Activated CD4-positive, alpha-beta T cell treated with anti-CD3 and anti-CD28 coated beads for 36 hours (primary cell): ENCODE measurements at regions of chr1 and their contacts with region 1.

Region 1: GRCh38 chr1:101288491-101288944 is 51.7 kb downstream of the S1PR1 start:
- DNase-seq: peak; percentile 80
- ATAC-seq: peak; percentile 31
- H3K4me3 Mint-ChIP-seq: no peak overlapping the region
- H3K27ac Mint-ChIP-seq: peak overlapping the region; percentile 58
- H3K4me1 Mint-ChIP-seq: peaks cover 92% of the 10 kb centered on the region
- H3K27me3 Mint-ChIP-seq: no peaks in the 10 kb centered on the region

Region 2: GRCh38 chr1:100265931-100266740 is 1022.4 kb before region 1 on chr1 and contains the start of gene RTCA:
- CTCF ChIA-PET with region 1: no interaction called
- POLR2A ChIA-PET with region 1: no interaction called
- intact Hi-C with region 1: no loop called
- DNase-seq: peak; percentile 97
- ATAC-seq: peak; percentile 93
- H3K4me3 Mint-ChIP-seq: peak within 1 kb of the TSS; percentile 100
- H3K27ac Mint-ChIP-seq: peak within 1 kb of the TSS; percentile 99
- H3K4me1 Mint-ChIP-seq: peaks cover 32% of the 10 kb centered on the region
- H3K27me3 Mint-ChIP-seq: no peaks in the 10 kb centered on the region
- total RNA-seq, gene RTCA: 47.8 to 53.0 TPM

Region 3: DNA sequence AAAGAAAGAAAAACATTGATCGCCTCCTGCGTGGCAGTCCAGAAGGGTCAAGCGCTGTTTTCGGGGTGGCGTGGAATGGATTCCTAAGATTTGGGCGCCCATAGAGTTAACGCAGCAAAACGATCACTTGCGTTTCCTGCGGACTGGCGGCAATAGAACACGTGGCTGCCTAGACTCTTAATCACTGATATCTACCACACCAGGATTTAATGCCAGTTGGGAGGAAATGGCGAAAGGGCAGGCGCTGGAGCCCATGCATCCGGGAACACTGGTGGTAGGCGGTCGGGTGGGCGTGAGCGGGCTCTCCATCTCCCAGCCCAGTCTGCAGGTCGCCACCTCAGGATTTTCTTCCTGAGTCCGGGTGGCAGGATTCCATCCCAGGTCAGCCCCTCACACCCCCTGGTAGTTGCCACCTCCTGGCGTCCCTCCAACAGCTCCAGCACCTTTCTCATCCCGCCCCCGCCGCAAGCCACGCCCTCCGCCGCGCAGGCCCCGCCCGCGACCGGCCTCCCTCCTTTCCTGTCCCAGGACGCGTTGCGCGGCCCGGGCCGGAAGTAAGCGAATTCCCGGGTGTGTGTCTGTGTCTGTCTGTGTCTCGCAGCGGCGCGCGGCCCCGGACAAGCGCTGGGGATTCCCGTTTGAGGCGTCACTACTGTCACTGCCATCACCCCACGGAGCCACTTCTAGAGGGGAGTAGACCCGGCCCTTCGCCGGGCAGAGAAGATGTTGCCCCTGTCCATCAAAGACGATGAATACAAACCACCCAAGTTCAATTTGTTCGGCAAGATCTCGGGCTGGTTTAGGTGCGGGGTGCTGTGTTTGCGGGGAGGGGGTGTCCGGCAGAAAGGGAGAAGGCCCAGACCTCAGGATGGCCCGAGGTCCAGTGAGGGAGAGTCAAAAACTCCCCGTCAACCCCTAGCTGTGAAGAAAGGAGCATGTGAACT is 392.7 kb before region 1 on chr1 and contains the start of gene SLC30A7:
- CTCF ChIA-PET with region 1: interaction called, 6 read pairs
- POLR2A ChIA-PET with region 1: no interaction called
- intact Hi-C with region 1: loop called in 1 of 2 experiments (anchors 1 kb)
- DNase-seq: peak; percentile 98
- ATAC-seq: peak; percentile 81
- H3K4me3 Mint-ChIP-seq: peak within 1 kb of the TSS; percentile 100
- H3K27ac Mint-ChIP-seq: peak within 1 kb of the TSS; percentile 100
- H3K4me1 Mint-ChIP-seq: peaks cover 44% of the 10 kb centered on the region
- H3K27me3 Mint-ChIP-seq: no peaks in the 10 kb centered on the region
- total RNA-seq, gene SLC30A7: 33.2 to 34.6 TPM

Region 4: GRCh38 chr1:101002551-101002950 is 286.0 kb before region 1 on chr1:
- CTCF ChIA-PET with region 1: interaction called, 7 read pairs
- POLR2A ChIA-PET with region 1: no interaction called
- intact Hi-C with region 1: loop called (anchors 2 to 5 kb)
- DNase-seq: no peak
- ATAC-seq: no peak
- H3K4me3 Mint-ChIP-seq: no peak overlapping the region
- H3K27ac Mint-ChIP-seq: no peak overlapping the region
- H3K4me1 Mint-ChIP-seq: peaks cover 50% of the 10 kb centered on the region
- H3K27me3 Mint-ChIP-seq: no peaks in the 10 kb centered on the region

Region 5: GRCh38 chr1:101130673-101131072 is 157.8 kb before region 1 on chr1:
- CTCF ChIA-PET with region 1: interaction called, 31 read pairs
- POLR2A ChIA-PET with region 1: interaction called, 3 read pairs
- intact Hi-C with region 1: no loop called
- DNase-seq: no peak
- ATAC-seq: no peak
- H3K4me3 Mint-ChIP-seq: no peak overlapping the region
- H3K27ac Mint-ChIP-seq: no peak overlapping the region
- H3K4me1 Mint-ChIP-seq: peaks cover 68% of the 10 kb centered on the region
- H3K27me3 Mint-ChIP-seq: no peaks in the 10 kb centered on the region

Region 6: DNA sequence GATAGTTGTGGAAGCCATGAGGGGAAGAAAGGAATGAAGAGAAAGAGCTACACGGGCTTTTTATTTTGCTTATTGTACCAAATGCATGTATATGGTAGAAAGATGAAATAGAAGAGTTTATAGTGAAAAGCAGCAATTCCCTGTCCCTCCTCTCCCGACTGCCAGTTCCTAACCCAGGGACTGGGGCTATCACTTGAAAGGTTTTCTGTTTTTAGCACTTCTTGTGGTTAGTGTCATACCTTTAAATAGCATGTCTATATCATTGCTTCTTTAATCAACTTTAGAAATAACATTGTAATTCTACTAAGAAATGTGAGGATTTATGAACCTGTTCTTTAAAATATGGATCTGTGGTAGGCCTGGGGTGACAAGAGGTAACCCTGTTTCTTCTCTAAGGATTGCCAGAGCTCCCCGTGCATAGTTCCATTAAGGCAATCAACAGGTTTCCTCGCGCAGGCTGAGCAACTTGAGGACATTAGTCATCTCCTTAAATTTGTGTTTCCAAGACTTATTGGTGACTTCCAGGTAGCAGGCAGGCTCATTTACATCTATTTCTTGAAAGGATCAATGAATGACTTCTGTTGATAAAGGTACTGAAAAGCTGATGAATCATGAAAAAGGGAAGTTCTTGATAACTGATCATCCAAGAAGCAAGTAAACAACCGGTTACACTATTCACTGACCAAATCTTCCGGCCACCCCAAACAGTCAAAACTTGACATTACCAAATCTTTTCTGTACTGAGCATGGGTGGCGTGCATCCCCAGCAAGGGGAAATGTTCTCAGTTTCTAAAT is 89.5 kb before region 1 on chr1:
- CTCF ChIA-PET with region 1: interaction called, 8 read pairs
- POLR2A ChIA-PET with region 1: interaction called, 10 read pairs
- intact Hi-C with region 1: loop called (anchors 1 kb)
- DNase-seq: peak; percentile 79
- ATAC-seq: peak; percentile 86
- H3K4me3 Mint-ChIP-seq: no peak overlapping the region
- H3K27ac Mint-ChIP-seq: peak overlapping the region; percentile 85
- H3K4me1 Mint-ChIP-seq: peaks cover 35% of the 10 kb centered on the region
- H3K27me3 Mint-ChIP-seq: no peaks in the 10 kb centered on the region

Region 7: GRCh38 chr1:101262630-101263348 is 25.7 kb before region 1 on chr1:
- CTCF ChIA-PET with region 1: interaction called, 14 read pairs
- POLR2A ChIA-PET with region 1: interaction called, 3 read pairs
- intact Hi-C with region 1: loop called in 1 of 2 experiments (anchors 2 kb)
- DNase-seq: no peak
- ATAC-seq: peak; percentile 40
- H3K4me3 Mint-ChIP-seq: peak overlapping the region; percentile 55
- H3K27ac Mint-ChIP-seq: peak overlapping the region; percentile 84
- H3K4me1 Mint-ChIP-seq: peaks cover 84% of the 10 kb centered on the region
- H3K27me3 Mint-ChIP-seq: no peaks in the 10 kb centered on the region

Region 8: GRCh38 chr1:101371259-101371658 is 82.7 kb after region 1 on chr1:
- CTCF ChIA-PET with region 1: interaction called, 3 read pairs
- POLR2A ChIA-PET with region 1: no interaction called
- intact Hi-C with region 1: loop called in 1 of 2 experiments (anchors 1 kb)
- DNase-seq: no peak
- ATAC-seq: peak; percentile 95
- H3K4me3 Mint-ChIP-seq: no peak overlapping the region
- H3K27ac Mint-ChIP-seq: no peak overlapping the region
- H3K4me1 Mint-ChIP-seq: peaks cover 10% of the 10 kb centered on the region
- H3K27me3 Mint-ChIP-seq: peaks cover 6% of the 10 kb centered on the region

Region 9: GRCh38 chr1:101399222-101399621 is 110.7 kb after region 1 on chr1:
- CTCF ChIA-PET with region 1: no interaction called
- POLR2A ChIA-PET with region 1: no interaction called
- intact Hi-C with region 1: no loop called
- DNase-seq: no peak
- ATAC-seq: no peak
- H3K4me3 Mint-ChIP-seq: no peak overlapping the region
- H3K27ac Mint-ChIP-seq: no peak overlapping the region
- H3K4me1 Mint-ChIP-seq: no peaks in the 10 kb centered on the region
- H3K27me3 Mint-ChIP-seq: no peaks in the 10 kb centered on the region

Region 10: DNA sequence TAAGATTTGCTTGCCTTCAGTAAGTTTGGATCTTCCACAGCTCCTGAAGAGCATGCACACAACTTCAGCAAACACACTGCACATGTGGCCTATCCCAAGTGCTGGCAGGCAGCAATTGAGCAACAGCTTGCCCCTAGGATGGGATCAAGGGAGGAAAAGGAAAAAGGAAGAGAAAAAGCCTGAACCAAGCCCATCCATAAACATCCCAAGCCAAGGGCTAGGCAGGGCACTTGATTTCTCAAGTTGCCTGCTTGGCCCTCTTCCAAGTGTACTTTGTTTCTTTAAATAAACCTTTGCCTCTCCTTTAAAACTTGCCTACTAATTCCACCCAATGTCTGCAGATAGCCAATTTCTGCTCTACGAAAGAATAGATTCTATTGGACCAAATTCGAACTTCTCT is 757.2 kb after region 1 on chr1:
- CTCF ChIA-PET with region 1: no interaction called
- POLR2A ChIA-PET with region 1: no interaction called
- intact Hi-C with region 1: no loop called
- DNase-seq: no peak
- ATAC-seq: no peak
- H3K4me3 Mint-ChIP-seq: no peak overlapping the region
- H3K27ac Mint-ChIP-seq: no peak overlapping the region
- H3K4me1 Mint-ChIP-seq: no peaks in the 10 kb centered on the region
- H3K27me3 Mint-ChIP-seq: no peaks in the 10 kb centered on the region